ENCODE measurements at regions of chr1 and their contacts with region 1.

Region 1: DNA sequence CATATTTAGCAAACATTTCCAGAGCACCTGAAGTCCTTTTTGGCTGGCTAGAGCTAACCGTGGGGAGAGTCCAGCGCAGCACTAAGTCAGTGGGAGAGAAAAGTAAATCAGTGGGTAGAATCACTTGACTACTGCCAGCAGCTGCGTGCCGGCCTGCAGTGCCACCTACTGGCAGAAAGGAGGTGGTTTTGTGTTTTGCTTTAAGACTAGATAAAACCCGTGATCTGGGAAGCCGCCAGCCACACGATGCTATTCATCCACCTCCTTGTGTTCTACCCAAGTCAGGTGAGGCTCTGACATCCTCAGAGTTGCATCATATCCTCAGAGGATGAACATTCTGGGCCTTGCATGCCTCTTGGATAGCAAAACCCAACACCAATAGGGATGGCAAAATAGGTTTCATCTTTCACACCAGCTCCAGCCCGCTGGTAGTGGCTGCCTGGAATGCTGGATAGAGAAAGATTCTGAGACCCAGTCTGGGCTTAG is 14.1 kb upstream of the HEYL start:
- DNase-seq: peak; percentile 92
- ATAC-seq: peak; percentile 79
- H3K4me3 Mint-ChIP-seq: no peak overlapping the region
- H3K27ac Mint-ChIP-seq: no peak overlapping the region
- H3K4me1 Mint-ChIP-seq: peaks cover 11% of the 10 kb centered on the region
- H3K27me3 Mint-ChIP-seq: peaks cover 8% of the 10 kb centered on the region
- CTCF ChIP-seq: peak; percentile 76

Region 2: DNA sequence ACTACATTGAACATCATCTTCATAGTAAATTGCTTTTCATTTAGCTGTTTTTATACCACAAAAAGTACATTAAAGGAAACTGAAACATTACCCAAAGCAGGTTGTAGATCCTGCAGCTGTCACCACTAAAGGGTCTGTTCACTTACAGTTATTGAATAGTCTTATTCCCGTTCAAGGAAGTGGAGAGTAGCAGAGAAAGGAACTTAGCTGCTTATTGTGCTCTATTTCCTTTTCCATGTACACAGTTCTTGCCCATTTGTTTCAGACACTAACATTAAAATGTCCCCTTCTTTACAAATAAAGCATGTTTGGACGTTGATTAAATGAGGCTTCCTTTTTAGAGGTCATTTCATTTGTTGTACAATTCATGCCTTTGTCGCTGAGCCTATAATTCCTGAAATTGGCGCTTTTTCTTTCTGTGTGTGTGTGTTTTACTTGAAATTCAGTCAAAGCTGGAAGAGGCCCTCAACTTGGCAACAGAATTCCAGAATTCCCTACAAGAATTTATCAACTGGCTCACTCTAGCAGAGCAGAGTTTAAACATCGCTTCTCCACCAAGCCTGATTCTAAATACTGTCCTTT is 206.5 kb before region 1 on chr1:
- CTCF ChIA-PET with region 1: no interaction called
- POLR2A ChIA-PET with region 1: no interaction called
- intact Hi-C with region 1: no loop called
- DNase-seq: no peak
- ATAC-seq: no peak
- H3K4me3 Mint-ChIP-seq: no peak overlapping the region
- H3K27ac Mint-ChIP-seq: no peak overlapping the region
- H3K4me1 Mint-ChIP-seq: no peaks in the 10 kb centered on the region
- H3K27me3 Mint-ChIP-seq: no peaks in the 10 kb centered on the region
- CTCF ChIP-seq: no peak

Region 3: DNA sequence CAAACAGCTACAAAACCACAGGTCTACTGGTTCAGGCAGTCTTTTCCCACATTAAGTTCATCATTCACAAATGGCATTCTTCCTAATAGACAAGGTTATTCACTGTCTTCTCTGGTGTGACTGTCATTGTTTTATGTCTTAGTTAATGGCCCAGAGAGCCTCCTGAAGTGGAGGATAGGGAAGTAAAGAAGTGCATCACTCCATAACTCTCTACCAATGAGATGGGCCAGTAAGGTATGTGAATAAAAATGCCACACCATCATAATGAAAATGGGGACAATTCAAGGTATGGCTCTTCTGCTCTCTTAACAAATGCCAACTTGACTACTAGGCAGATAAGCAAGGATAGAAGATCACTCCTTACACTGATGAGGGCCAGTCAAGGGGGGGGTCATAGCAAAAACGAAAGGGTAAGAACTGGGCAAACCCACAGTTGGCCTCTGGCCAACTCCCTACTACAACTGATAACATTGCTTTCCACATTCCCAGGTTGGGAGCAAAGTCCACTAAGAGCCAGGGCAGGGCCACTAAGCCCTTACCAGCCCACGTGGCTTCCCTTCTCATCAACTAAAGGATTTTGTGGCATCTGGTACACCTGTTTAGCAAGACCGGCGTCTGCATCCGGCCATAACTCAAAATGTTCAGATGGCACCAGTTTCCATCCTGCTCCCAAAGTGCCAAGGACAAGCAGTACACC is 87.0 kb before region 1 on chr1:
- CTCF ChIA-PET with region 1: no interaction called
- POLR2A ChIA-PET with region 1: no interaction called
- intact Hi-C with region 1: no loop called
- DNase-seq: no peak
- ATAC-seq: no peak
- H3K4me3 Mint-ChIP-seq: no peak overlapping the region
- H3K27ac Mint-ChIP-seq: no peak overlapping the region
- H3K4me1 Mint-ChIP-seq: peaks cover 9% of the 10 kb centered on the region
- H3K27me3 Mint-ChIP-seq: no peaks in the 10 kb centered on the region
- CTCF ChIP-seq: no peak

Region 4: DNA sequence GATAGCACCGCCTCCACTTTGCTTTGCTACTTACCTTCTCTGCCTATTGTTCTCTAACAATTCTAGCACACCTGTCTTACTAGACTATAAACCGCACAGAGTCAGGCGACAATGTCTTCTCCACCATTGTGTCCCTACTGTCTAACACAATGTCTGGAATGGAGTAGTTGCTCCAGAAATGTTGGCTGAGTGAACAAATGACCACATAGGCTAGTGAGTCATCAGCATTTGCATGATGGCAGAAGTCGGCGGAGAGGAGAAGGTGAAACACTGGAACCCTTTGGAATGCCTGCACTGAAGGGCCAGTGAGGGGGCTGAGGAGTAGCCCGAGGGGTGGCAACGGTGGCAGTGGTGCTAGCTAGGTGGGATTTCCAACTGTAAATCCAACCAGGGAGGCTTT is 63.0 kb before region 1 on chr1:
- CTCF ChIA-PET with region 1: interaction called, 16 read pairs
- POLR2A ChIA-PET with region 1: no interaction called
- intact Hi-C with region 1: no loop called
- DNase-seq: no peak
- ATAC-seq: no peak
- H3K4me3 Mint-ChIP-seq: no peak overlapping the region
- H3K27ac Mint-ChIP-seq: no peak overlapping the region
- H3K4me1 Mint-ChIP-seq: no peaks in the 10 kb centered on the region
- H3K27me3 Mint-ChIP-seq: no peaks in the 10 kb centered on the region
- CTCF ChIP-seq: no peak

Region 5: GRCh38 chr1:39617488-39618049 is 36.0 kb before region 1 on chr1:
- CTCF ChIA-PET with region 1: interaction called, 329 read pairs
- POLR2A ChIA-PET with region 1: no interaction called
- intact Hi-C with region 1: no loop called
- DNase-seq: no peak
- ATAC-seq: no peak
- H3K4me3 Mint-ChIP-seq: no peak overlapping the region
- H3K27ac Mint-ChIP-seq: no peak overlapping the region
- H3K4me1 Mint-ChIP-seq: no peaks in the 10 kb centered on the region
- H3K27me3 Mint-ChIP-seq: peaks cover 9% of the 10 kb centered on the region
- CTCF ChIP-seq: no peak

Region 6: DNA sequence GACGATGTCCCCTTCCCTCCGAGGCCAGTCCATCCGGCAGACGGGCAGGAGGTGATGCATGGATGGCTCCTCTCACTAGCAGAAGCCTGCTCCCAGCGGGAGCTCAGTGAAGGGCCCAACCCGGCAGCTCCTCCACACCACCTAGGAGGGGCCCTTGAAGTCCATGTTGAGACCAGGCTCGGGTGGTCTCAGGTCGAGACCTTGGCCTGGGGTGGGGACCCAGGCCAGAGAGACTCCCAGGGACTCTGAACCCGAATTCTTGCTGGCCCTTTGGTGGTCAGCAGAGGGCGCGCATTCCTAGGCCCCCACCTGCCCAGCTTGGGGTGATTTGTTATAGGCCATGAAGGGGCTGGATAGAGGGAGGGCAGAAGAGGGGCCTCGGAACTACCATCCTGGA is 19.0 kb after region 1 on chr1:
- CTCF ChIA-PET with region 1: interaction called, 311 read pairs
- POLR2A ChIA-PET with region 1: interaction called, 5 read pairs
- intact Hi-C with region 1: no loop called
- DNase-seq: peak; percentile 53
- ATAC-seq: peak; percentile 43
- H3K4me3 Mint-ChIP-seq: peak overlapping the region; percentile 58
- H3K27ac Mint-ChIP-seq: no peak overlapping the region
- H3K4me1 Mint-ChIP-seq: peaks cover 13% of the 10 kb centered on the region
- H3K27me3 Mint-ChIP-seq: peaks cover 36% of the 10 kb centered on the region
- CTCF ChIP-seq: peak; percentile 66

Region 7: DNA sequence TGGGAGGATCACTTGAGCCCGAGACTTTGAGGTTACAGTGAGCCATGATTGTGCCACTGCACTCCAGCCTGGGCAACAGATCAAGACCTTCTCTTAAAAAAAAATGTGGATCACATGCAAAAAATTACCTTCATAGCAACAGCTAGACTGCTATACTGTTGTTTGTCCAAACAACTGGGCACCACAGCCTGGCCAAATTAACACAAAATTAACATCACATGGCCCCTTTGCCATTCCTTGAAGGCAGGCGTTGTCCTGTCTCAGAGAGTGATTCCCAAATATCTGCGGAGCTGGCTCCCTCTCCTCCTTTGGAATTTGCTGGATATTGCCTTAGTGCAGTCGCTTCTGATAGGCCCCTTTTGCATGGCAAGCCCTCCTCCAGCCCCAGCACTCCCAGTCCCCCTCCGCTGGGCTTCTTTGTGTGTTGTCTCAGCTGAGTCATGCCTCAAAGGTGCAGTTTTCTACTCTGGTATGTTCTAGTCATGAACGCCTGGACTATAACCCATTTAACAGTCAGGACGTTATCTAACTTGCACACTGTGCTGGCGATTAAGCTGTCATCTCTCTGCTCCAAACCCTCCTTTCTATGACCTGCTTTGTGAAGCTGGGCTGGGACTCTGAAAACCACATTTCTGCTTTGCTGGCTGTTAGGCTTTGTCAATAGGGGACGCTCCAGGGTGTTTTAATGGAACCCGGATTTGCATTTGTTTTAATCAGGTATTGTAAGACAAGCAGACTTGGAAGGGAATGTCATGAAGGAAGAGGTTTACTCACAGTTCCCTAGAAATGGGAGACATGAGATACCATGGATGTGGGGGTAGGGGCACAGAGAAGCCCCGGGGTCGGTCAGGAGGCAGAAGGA is 57.7 kb after region 1 on chr1:
- CTCF ChIA-PET with region 1: interaction called, 14 read pairs
- POLR2A ChIA-PET with region 1: no interaction called
- intact Hi-C with region 1: no loop called
- DNase-seq: no peak
- ATAC-seq: no peak
- H3K4me3 Mint-ChIP-seq: no peak overlapping the region
- H3K27ac Mint-ChIP-seq: no peak overlapping the region
- H3K4me1 Mint-ChIP-seq: no peaks in the 10 kb centered on the region
- H3K27me3 Mint-ChIP-seq: peaks cover 18% of the 10 kb centered on the region
- CTCF ChIP-seq: no peak

Region 8: GRCh38 chr1:39761525-39762260 is 108.1 kb after region 1 on chr1:
- CTCF ChIA-PET with region 1: no interaction called
- POLR2A ChIA-PET with region 1: no interaction called
- intact Hi-C with region 1: no loop called
- DNase-seq: no peak
- ATAC-seq: no peak
- H3K4me3 Mint-ChIP-seq: no peak overlapping the region
- H3K27ac Mint-ChIP-seq: no peak overlapping the region
- H3K4me1 Mint-ChIP-seq: no peaks in the 10 kb centered on the region
- H3K27me3 Mint-ChIP-seq: no peaks in the 10 kb centered on the region
- CTCF ChIP-seq: no peak

Measured in activated CD8-positive, alpha-beta T cell treated with anti-CD3 and anti-CD28 coated beads for 36 hours (primary cell).